Right ventricle myocardium inferior (tissue), 1 donor: ENCODE measurements at regions of chr4 and their contacts with region 1.

Region 1: DNA sequence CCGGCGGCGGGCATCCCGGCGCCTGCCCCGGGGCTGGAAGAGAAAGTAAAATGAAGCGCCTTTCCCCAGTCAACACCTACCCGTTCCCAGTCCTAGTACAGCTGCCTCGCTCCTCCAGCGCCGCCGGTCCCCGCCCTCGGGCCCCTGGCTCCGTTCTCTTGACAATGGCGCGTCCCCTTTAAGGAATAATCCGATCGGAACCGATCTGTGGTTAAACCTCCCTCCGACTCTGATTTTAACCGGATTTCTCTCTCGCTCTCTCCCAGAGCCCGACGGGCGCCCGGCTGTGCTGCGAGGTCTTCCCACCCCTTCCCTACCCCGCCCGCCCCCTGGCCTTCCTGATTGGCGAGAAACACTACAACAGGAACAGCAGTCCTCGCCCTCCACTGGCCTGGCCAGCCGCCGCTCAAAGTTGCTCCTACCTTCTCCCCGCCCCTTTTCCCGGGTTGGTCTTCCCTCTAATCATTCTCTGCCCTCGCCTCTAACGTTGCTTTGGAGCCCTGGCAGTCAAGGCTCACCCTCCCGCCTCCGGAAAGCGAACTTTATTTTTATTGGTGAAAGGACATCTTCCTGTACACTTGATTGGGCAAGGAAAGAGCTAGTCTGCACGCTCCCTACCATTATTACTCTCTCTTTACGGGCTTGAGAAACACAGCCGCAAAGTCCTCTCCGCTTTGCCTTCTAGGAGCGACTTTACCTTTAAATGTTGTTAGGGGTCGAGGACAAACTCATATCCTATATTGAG is at the start of gene FRYL:
- DNase-seq: peak; percentile 100
- ATAC-seq: peak; percentile 97
- total RNA-seq, gene FRYL: 36.2 TPM

Region 2: DNA sequence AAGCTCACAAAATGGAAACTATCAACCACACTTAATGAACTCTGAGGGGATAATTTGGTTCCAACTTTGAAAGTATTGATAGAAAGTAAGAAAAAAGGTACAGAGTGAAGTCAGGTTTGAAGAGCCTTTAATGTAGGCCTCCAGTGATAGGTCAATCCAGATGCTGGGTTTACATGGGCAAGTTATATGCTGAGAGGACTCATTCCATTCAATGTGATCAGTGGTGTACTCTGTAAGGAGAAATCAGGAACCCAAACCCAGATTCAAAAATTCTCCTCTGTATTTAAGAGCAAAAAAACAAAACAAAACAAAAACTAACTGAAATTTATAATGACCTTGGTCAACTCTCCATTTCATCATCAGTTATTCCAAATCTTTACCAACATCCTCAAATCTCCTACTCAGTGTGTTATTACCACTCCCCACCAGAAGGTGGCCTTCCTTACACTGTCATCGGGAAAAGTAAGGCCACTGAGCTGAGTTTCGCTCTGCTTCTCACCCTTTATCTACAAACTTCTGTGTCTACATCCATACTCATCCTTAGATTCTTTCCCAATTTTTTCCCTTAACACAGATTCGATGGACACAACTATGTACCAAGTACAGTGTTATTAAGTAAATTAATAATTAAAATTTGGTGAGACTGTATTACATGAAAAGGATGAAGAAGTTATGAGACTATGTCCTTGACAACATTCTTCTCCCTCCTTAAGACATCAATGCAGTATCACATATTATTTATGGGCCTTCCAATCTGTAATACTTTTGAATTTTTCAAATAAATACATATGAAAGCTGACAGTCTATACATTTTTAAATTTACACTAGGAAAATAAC is 201.8 kb before region 1 on chr4:
- intact Hi-C with region 1: loop called (anchors 5 kb)
- DNase-seq: no peak
- ATAC-seq: peak; percentile 74

Region 3: DNA sequence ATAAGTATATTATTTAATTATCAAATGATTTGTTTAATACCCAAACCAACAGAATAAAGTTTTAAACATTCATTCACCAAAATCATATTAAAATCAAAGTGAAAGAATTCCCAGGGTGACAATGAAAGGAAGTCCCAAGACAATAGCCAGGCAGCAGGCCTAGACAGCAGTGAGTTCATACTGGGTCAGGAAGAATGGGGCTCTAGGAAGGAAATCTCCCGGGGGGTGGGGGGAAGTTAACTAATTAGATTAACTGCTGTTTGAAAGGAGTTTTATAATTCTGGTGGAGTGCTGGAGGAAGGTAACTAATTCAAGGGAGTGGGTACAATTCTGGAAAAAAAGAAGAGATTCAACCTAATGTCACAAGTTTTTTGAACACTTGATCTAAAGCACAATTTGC is 186.0 kb before region 1 on chr4:
- intact Hi-C with region 1: loop called (anchors 5 kb)
- DNase-seq: no peak
- ATAC-seq: no peak

Region 4: GRCh38 chr4:48642421-48643374 is 137.5 kb before region 1 on chr4:
- intact Hi-C with region 1: no loop called
- DNase-seq: no peak
- ATAC-seq: no peak

Region 5: GRCh38 chr4:48706736-48707135 is 73.4 kb before region 1 on chr4:
- intact Hi-C with region 1: loop called (anchors 10 kb)
- DNase-seq: no peak
- ATAC-seq: no peak

Region 6: DNA sequence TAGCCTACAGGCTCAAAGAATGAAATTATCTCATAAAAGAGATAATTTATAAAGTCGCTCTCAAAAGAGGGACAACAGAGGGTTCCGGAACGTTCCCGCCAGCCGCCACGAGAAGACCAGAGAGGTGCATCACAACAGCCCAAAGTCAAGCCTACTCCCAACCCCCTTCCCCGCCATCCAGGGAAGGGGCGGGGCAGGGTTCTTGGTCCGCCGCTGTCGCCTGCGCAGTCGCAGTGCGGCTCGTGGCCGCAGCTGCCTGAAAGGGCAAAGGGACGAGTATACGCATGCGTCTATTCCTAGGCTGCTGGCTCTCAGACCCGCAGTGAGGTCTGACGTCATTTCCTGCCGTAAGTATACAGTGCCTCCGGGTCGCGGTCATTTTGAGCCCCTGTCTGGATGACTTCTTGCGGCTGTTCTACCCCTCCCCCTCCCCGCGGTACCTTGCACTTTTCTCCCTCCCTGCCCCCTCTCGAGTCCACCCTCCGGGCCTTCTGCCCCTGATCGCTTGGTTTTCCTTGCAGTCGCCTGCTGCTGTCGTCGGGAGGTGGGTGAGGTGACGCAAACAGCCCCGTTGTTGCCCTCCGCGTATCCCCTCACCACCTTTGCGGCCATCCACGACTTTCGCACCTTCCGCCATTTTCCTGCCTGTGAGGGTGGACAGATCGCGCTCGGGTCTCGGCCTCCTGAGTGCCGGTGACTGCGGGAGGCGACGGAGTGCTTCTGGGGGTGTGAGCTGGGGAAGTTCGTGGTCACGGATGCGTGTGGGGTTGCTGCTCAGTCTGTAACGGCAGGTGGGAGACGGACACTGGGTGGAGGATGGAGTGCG is 50.7 kb after region 1 on chr4 and contains the start of gene OCIAD1:
- intact Hi-C with region 1: loop called (anchors 1 kb)
- DNase-seq: peak; percentile 98
- ATAC-seq: peak; percentile 100
- total RNA-seq, gene OCIAD1: 128 TPM

Region 7: DNA sequence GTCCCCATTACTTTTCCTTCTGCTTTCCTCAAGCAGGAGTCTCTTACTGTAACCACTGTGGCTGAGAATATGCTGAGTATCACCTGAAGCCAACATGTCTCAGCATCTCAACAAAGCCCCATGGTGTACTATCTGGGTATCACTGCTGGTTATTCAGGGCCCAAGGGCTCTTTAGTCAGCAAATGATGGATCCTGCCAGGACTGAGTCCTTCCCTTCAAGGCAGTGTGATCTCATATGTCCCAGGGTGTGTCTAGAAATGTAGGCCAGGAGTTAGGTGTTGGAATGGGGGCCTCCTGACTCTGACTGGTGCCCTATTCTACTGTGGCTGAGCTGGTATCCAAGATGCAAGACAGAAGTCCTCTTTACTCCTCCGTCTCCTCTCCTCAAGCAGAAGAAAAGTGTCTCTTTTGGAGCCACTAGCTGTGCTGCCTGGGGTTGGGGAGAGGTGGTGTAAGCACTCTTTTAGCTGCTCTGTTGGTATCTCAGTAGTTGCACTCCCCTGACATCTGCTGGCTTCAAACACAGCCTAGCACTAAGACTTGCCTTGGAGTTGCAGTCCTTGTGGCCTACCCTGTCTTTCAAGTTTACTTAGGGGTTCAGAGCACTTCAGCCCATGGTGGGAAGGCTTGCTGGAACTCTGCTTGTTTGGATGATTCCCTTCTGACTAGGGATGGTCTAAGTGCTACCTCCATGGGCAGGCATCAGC is 97.8 kb after region 1 on chr4:
- intact Hi-C with region 1: no loop called
- DNase-seq: no peak
- ATAC-seq: no peak

Region 8: GRCh38 chr4:48963042-48963679 is 183.0 kb after region 1 on chr4:
- intact Hi-C with region 1: loop called (anchors 5 kb)
- DNase-seq: no peak
- ATAC-seq: peak; percentile 76